ENCODE measurements at regions of chr21 and their contacts with region 1.

Region 1: DNA sequence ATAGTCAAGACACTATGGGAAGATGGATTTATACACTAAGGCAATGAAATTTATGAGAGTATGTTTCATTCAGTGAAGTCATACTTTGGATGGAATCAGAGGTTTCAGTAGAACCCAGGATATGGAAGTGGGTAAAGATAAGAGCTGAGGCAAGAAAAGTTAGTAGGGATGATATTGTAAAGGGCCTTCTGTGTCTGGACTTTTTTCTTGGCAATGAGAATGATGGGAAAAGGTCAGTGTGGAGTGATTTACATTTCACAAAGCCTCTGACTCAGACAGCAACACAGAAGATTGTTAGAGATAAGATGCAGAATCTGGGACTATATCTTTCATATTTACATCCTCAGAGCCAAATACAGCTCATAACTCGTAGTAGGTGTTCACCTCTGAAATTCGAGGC is 32.2 kb downstream of the SH3BGR start:
- DNase-seq: no peak
- H3K4me3 ChIP-seq: no peak overlapping the region
- H3K27ac ChIP-seq: no peak overlapping the region
- H3K4me1 ChIP-seq: no peaks in the 10 kb centered on the region
- H3K27me3 ChIP-seq: no peaks in the 10 kb centered on the region
- CTCF ChIP-seq: no peak
- EP300 ChIP-seq: no peak
- POLR2A ChIP-seq: no peak

Region 2: GRCh38 chr21:39502631-39503030 is 18.7 kb after region 1 on chr21:
- intact Hi-C with region 1: loop called in 1 of 4 experiments (anchors 2 kb)
- DNase-seq: no peak
- H3K4me3 ChIP-seq: no peak overlapping the region
- H3K27ac ChIP-seq: no peak overlapping the region
- H3K4me1 ChIP-seq: no peaks in the 10 kb centered on the region
- H3K27me3 ChIP-seq: no peaks in the 10 kb centered on the region
- CTCF ChIP-seq: no peak
- EP300 ChIP-seq: no peak
- POLR2A ChIP-seq: no peak

Measured in ovary (tissue), 10 donors.